ENCODE measurements at regions of chr19 and their contacts with region 1.

Region 1: DNA sequence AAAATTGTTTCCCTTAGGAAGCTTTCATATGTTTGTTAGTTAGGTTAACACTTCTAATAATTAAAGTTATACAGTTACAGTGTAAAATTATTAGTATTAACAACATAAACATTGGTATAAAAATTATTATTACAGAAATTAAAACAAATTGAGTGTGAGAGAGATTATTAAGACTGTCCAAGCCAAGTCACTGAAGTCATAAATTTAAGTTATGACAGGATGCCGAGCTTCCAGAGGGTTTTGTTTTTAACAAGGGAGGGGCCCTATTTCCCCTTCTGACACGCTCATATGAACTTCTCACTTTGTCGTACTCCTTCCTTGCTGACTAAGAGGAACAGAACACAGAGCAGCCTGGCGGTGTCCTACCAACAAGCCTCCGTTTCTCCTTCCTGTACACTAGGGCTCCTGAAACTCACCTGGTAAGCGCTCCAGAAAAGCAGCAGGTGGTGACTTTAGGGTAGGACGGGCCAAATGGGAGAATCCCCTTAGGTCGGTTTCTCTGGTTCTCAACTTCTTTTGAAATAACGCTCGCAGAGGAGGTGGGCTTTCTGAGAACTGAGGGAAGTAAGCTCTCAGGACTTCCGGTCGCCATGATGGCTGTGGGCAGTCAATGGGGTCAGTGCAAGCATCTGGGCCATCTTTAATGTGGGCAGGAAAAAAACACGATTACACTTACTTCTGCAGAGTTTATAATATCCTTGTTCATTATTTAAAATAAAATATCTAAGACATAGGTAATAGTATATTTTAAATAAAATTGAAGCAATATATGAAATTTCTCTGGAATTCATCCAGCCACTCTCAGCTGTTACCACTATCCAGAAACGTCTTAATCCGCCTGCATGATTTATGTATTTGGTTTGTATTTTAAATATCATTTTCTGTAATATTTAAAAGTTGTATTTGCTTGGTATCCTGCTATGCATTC is at the start of gene CARD8:
- H3K4me3 ChIP-seq: peak within 1 kb of the TSS; percentile 65
- H3K27ac ChIP-seq: peak within 1 kb of the TSS; percentile 70
- H3K4me1 ChIP-seq: no peaks in the 10 kb centered on the region
- CTCF ChIP-seq: no peak

Region 2: DNA sequence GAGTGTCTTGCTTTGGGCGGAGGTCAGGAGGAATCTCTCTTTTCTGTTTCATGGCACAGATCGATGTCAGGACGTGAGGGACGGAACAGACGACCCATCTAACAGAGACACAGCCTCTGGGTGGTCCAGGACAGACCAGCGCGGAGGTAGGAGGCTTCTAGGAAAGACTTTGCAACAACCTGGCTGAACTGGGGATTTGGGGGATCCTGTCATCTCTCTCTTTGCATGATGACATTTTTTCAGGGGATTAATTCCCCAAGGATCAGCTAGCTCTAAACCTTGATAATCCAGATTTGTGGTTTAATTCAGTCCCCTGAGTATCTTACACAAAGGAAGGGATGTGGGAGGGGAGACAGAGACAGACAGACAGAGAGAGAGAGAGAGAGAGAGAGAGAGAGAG is 226.2 kb before region 1 on chr19:
- CTCF ChIA-PET with region 1: no interaction called
- POLR2A ChIA-PET with region 1: no interaction called
- H3K4me3 ChIP-seq: no peak overlapping the region
- H3K27ac ChIP-seq: no peak overlapping the region
- H3K4me1 ChIP-seq: no peaks in the 10 kb centered on the region
- CTCF ChIP-seq: no peak

Region 3: GRCh38 chr19:48085904-48086864 is 169.5 kb before region 1 on chr19:
- CTCF ChIA-PET with region 1: no interaction called
- POLR2A ChIA-PET with region 1: no interaction called
- H3K4me3 ChIP-seq: no peak overlapping the region
- H3K27ac ChIP-seq: no peak overlapping the region
- H3K4me1 ChIP-seq: no peaks in the 10 kb centered on the region
- CTCF ChIP-seq: 0 out of 2 replicates have a peak, but pooled peaks have one; percentile 8

Region 4: DNA sequence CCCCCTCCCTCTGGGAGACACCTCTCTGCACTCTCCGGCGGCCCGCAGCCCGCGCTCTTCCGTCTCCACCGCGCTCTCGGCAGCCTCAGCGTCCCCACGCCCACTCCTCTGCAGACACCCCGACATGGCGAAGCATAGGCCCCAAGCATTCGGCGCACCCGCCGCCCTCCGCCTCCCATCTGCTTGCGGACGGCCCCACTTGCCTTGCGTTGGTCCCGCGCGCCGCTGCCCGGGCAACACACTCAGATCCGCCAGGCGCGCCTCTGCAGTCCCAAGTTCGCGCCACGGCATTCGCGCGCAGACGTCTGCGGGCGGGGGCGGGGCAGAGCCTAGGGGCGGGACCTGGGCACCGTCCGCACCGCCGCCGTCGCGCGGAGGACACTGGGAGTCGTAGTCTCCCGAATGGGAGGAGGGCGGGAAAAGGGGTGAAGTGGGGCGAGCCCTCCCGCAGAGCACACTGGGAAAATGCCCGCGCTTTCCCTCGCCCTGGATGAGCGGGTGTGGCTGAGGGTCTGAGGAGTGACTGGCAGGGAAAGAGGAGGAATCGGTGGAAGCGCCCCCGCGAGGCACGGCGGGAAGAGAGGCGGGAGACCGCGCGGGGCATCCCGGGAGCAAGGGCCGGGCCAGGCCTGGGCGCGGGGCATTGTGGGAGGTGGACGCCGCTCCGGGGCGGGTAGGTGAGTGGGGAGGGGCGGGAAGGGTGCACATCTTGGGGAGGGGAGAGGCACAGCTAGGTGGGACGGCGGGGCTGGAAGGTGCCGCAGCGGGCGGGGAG is 85.4 kb before region 1 on chr19 and contains the starts of genes LIG1 and ZSWIM9:
- CTCF ChIA-PET with region 1: interaction called, 5 read pairs
- POLR2A ChIA-PET with region 1: interaction called, 11 read pairs
- H3K4me3 ChIP-seq: peak within 1 kb of the TSS; percentile 98
- H3K27ac ChIP-seq: peak within 1 kb of the TSS; percentile 99
- H3K4me1 ChIP-seq: peaks cover 13% of the 10 kb centered on the region
- CTCF ChIP-seq: peak; percentile 87

Region 5: GRCh38 chr19:48271531-48272151 is 16.0 kb after region 1 on chr19:
- CTCF ChIA-PET with region 1: interaction called, 13 read pairs
- POLR2A ChIA-PET with region 1: interaction called, 3 read pairs
- H3K4me3 ChIP-seq: peak overlapping the region; percentile 41
- H3K27ac ChIP-seq: no peak overlapping the region
- H3K4me1 ChIP-seq: no peaks in the 10 kb centered on the region
- CTCF ChIP-seq: no peak

Region 6: DNA sequence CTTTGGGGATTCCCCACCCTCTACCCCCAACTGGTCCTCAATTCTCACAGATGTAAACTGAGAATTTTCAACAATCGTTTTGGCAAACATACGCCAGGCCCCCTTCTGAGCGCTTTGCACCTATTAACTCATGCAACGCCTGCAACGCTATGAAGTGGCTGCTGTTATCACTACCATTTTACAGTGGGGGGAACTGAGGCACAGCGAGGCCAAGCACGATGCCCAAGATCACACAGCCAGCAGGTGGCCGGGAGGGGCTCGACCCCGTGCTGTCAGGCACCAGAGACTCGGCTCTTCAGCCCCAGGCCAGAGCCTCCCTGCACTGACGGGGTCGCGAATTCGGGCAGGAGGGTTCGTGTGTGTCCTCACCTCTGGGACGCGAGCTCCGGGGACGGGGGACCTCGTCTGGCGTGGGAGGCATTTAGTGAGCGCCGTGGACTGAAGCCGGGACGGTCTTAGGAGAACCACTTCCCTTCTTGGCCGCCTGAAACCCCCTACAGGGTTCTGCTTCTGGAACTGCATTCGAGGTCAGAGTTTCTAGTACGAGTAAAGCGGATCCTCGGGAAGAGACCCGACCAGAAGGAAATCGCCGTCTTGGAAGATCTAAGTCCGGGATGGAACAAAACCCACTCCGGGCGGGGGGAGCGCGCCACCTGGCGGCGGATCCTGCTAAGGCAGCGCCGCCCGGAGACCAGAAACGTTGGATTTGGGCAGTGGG is 35.3 kb after region 1 on chr19:
- CTCF ChIA-PET with region 1: interaction called, 15 read pairs
- POLR2A ChIA-PET with region 1: no interaction called
- H3K4me3 ChIP-seq: peak overlapping the region; percentile 38
- H3K27ac ChIP-seq: no peak overlapping the region
- H3K4me1 ChIP-seq: no peaks in the 10 kb centered on the region
- CTCF ChIP-seq: peak; percentile 89

Region 7: DNA sequence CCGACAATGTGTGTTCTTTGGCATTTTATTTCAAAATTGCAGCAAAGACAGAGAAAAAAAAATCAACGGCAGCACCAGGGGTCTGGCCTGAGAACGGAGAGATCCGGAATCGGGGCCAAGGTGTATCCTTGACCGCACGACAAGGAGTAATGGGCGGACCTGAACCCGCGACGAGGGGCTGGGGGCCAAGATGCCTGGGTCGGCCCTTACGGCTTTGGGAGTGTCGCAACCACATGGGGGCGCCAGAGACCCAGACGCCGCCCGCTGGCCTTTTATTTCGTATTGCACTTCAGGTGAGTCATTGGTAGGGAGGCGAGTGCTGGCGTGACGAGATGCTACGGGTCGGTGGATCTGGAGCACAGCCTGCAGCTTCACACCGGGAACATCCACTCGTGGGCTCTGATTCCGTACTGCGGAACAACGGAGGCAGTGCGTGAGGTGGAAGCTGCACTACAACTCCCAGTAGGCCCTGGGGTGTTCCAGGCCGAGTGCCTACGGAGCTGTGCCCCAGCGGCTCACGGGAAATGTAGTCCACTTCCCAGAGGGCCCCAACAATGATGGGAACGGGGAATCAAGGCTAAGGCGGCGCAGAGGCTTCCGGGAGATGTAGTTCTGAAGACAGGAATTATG is 539.5 kb after region 1 on chr19:
- CTCF ChIA-PET with region 1: no interaction called
- POLR2A ChIA-PET with region 1: no interaction called
- H3K4me3 ChIP-seq: peak overlapping the region; percentile 54
- H3K27ac ChIP-seq: no peak overlapping the region; the same call in 1 of the 2 replicates
- H3K4me1 ChIP-seq: no peaks in the 10 kb centered on the region
- CTCF ChIP-seq: peak; percentile 99